AG04450 (cell line): ENCODE measurements at regions of chr12 and their contacts with region 1.

Region 1: DNA sequence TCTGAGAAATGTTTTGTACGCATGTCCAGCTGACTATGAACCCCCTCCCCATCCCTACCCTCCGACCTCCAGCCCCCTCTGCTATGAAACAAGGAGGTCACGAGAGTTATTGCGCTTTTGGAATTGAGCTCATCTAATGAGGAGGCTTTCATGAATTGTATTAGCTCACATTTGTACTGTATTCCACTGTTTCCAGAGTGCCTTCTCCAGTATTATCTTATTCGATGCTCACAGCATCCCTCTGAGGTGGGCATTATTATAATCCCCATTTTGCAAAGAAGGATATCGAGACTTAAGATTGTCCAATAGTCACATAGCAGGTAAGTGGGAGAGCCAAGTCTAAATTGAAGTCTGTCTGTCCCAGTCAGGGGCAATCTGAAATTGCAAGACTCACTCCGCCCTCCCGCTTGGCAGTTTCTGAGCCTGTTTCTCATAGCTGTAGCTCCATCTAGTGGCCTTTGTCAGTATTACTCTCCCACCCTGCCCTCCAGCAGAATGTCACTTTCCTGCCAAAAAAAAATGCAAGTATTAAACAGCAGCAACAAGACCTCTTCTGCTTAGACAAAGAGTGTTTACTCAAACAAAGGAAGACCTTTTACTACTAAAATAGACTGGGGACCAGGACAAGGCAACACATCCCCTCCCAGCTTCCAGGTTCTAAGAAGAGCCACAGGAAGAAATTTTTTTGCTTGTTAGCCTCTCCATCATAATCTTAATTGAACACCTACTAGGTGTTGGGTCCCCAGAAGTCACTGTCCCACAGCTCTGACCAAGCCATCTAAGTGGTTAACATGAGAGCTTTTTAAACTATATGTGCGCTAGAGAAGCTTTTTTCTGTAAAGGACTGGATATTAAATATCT is 48.6 kb upstream of the TMEM233 start:
- DNase-seq: peak; percentile 49
- H3K4me3 ChIP-seq: no peak overlapping the region
- H3K27ac ChIP-seq: no peak overlapping the region
- H3K27me3 ChIP-seq: no peaks in the 10 kb centered on the region
- CTCF ChIP-seq: peak; percentile 87

Region 2: DNA sequence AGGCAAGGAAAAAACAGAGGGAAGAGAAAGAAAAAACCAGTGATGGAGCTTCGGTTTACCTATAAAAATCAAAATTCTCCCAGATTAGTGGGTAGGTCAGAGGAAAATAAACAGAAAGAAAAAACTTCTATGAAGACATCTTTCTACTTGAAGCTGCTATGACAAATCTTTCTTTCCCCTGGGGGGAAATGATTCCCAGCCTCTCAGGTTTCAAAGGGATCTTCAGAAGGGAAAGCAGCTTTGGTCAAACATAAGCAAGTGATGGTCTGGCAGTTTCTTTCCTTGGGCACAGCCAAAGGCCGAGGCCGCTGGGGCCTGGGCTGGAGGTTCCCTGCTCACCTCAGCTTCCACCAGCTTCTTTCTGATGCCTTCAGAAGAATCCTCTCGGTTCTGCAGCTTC is 227.4 kb after region 1 on chr12:
- CTCF ChIA-PET with region 1: no interaction called
- POLR2A ChIA-PET with region 1: no interaction called
- DNase-seq: no peak
- H3K4me3 ChIP-seq: no peak overlapping the region
- H3K27ac ChIP-seq: no peak overlapping the region
- H3K27me3 ChIP-seq: no peaks in the 10 kb centered on the region
- CTCF ChIP-seq: no peak

Region 3: DNA sequence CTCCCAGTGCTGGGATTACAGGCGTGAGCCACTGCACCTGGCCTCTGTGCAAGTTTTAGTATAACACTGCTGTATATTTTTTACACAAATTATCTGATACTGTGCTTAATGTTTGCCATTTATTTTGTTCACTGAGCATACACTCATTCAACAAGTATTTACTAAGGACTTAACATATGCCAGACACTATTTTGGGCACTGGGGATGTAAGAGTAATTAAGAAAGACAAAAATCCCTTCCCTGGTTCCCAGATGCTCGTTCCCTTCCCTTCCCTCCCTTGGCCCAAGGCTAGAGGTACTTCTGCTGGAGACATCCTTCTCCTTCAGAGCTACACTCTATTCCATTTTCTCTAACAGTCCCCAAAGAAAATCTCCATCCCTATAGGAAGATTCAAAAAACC is 319.6 kb after region 1 on chr12:
- CTCF ChIA-PET with region 1: interaction called, 11 read pairs
- POLR2A ChIA-PET with region 1: no interaction called
- DNase-seq: no peak
- H3K4me3 ChIP-seq: no peak overlapping the region
- H3K27ac ChIP-seq: no peak overlapping the region
- H3K27me3 ChIP-seq: no peaks in the 10 kb centered on the region
- CTCF ChIP-seq: no peak